ENCODE measurements at regions of chrX and their contacts with region 1.

Region 1: DNA sequence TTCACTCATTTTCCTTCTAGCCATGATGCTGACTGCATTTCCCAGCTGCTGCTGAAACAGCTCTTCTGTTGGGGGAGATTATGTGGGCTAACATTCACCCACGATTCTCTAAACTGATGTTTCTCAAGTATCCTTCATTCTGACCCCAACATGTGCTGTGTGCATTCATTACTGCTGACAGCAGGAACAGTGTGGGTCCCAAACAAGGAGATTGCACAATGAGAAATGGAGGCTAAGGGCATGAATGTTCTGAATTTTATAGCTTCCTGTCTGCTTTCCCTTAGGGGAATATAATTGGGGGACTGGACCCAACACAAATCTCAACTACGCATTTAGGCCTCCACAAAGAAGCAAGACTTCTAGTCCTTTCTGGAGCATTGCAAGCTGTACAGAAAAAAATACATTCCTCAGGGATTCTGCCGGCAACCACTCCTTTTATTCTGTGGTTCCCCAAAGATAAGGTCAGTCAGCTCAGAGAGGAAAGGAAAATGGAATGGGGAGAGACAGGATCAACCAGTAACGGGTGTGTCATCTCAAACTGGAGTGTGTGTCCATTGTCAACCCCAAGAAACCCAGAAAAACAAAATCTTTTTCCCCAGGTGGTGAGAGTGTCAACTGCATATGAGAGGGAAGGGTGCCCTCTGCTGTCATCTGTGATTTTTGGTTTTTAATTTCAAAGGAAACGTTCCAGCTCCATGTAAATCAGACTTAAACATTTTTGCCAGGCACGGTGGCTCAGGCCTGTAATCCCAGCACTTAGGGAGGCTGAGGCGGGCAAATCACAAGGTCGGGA is 81.5 kb upstream of the EGFL6 start:
- DNase-seq: peak; percentile 60 to 95
- H3K4me3 ChIP-seq: no peak overlapping the region; the same call in 1 of the 2 replicates
- H3K27ac ChIP-seq: peak overlapping the region; percentile 99
- H3K4me1 ChIP-seq: peaks cover 38% of the 10 kb centered on the region
- H3K27me3 ChIP-seq: no peaks in the 10 kb centered on the region
- CTCF ChIP-seq: peak; percentile 78

Region 2: GRCh38 chrX:12814420-12814819 is 673.5 kb before region 1 on chrX:
- CTCF ChIA-PET with region 1: no interaction called
- POLR2A ChIA-PET with region 1: no interaction called
- intact Hi-C with region 1: loop called (anchors 1 kb)
- DNase-seq: peak; percentile 44 to 51
- H3K4me3 ChIP-seq: no peak overlapping the region
- H3K27ac ChIP-seq: no peak overlapping the region
- H3K4me1 ChIP-seq: no peaks in the 10 kb centered on the region
- H3K27me3 ChIP-seq: no peaks in the 10 kb centered on the region
- CTCF ChIP-seq: peak; percentile 75

Region 3: GRCh38 chrX:12974796-12975669 is 512.9 kb before region 1 on chrX and contains the start of gene TMSB4X:
- CTCF ChIA-PET with region 1: no interaction called
- POLR2A ChIA-PET with region 1: interaction called, 19 read pairs
- intact Hi-C with region 1: loop called (anchors 1 kb)
- DNase-seq: peak; percentile 71 to 85
- H3K4me3 ChIP-seq: peak within 1 kb of the TSS; percentile 99
- H3K27ac ChIP-seq: peak within 1 kb of the TSS; percentile 99
- H3K4me1 ChIP-seq: peaks cover 36% of the 10 kb centered on the region
- H3K27me3 ChIP-seq: no peaks in the 10 kb centered on the region
- CTCF ChIP-seq: no peak
- total RNA-seq, gene TMSB4X: 2,589 and 3,588 TPM in 2 replicates

Region 4: DNA sequence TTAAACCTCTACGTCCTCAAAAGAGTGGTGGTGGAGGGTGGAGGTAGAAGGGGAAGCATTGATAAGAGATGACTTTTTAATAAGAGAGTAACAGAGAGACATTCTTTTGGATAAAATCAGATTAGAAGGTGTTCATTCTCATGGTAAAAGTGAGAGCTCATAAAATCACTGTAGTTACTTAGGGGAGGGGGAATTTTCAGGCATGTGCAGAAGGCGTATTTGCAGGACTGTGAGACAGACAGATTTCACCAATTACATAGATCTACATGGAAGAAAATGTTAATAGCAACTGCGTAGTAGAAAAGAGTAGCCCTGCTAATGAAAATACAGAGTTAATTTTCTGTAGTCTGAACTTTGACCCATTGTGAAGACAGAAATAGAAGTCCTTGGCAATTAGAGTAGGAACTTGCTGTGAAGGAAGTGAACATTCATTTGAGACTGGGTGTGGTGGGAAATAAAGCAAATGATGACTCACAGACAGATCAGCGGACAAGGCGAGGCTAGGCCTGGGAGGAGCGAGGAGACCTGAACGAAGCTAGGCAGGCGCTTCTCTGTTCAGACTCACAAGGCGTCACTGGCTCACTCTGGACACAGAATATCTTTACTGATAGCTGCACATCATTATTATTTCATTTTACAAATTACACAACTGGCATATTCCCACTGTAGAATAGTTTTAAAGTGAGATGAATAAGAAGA is 386.3 kb before region 1 on chrX:
- CTCF ChIA-PET with region 1: no interaction called
- POLR2A ChIA-PET with region 1: no interaction called
- intact Hi-C with region 1: loop called (anchors 1 kb)
- DNase-seq: peak; percentile 72 to 93
- H3K4me3 ChIP-seq: no peak overlapping the region; the same call in 1 of the 2 replicates
- H3K27ac ChIP-seq: peak overlapping the region; percentile 96
- H3K4me1 ChIP-seq: peaks cover 48% of the 10 kb centered on the region
- H3K27me3 ChIP-seq: no peaks in the 10 kb centered on the region
- CTCF ChIP-seq: no peak

Region 5: DNA sequence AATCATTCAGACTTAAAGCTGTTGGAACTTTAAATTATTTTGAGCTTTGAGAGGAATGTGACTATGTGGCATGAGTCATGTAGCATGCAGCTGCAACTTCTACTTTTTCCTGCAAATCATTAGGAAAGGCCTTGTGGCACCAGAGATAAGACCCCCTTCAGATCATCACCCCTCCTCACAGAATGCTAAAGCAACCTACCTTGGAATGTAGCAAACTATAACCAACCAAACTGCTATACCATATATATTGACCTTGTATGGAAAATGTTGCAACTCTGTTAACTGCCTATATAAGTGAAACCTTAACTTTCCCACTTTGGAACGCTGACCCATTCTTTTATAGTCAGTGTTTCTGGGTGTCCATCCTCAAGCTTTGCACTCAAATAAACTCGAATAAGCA is 200.1 kb before region 1 on chrX:
- CTCF ChIA-PET with region 1: no interaction called
- POLR2A ChIA-PET with region 1: interaction called, 16 read pairs
- intact Hi-C with region 1: loop called (anchors 1 kb)
- DNase-seq: peak; percentile 11 to 37
- H3K4me3 ChIP-seq: no peak overlapping the region
- H3K27ac ChIP-seq: peak overlapping the region; percentile 57
- H3K4me1 ChIP-seq: peaks cover 21% of the 10 kb centered on the region
- H3K27me3 ChIP-seq: no peaks in the 10 kb centered on the region
- CTCF ChIP-seq: no peak

Region 6: DNA sequence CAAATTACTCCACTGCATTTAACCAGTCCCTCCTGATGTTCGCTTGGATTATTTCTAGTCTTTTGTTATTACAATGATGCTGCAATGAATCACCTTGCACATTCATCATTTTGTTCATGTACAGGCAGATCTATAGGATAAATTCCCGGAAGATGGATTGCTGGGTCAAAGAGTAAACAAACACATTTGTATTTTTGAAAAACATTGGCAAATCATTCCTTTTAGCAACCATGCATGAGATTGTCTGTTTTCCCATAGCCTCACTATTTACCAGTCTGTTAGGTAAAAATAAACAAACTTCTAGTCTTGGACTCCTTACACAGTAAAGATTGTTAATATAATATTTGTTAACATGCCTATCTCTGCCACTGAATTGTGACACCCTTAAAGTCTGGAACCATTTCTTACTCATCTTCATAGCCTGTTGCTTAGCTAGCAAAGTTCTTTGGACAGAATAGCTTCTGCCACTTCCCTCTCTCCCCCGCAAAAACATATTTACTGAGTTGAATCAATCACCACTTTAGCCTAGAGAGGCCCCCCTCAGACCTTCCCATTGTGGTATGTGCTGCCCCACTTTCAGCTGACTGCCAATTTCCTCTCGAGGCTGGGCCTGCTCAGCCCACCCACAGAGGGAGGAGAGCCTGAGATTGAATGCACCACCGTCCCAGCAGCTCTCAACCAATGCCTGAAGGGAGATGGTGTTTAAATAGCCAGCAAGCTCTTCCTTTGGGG is 59.7 kb before region 1 on chrX:
- CTCF ChIA-PET with region 1: no interaction called
- POLR2A ChIA-PET with region 1: interaction called, 11 read pairs
- intact Hi-C with region 1: loop called (anchors 1 kb)
- DNase-seq: peak in 1 of 2 experiments; percentile 88
- H3K4me3 ChIP-seq: no peak overlapping the region
- H3K27ac ChIP-seq: peak overlapping the region; percentile 89
- H3K4me1 ChIP-seq: peaks cover 31% of the 10 kb centered on the region
- H3K27me3 ChIP-seq: no peaks in the 10 kb centered on the region
- CTCF ChIP-seq: no peak

Region 7: GRCh38 chrX:13996650-13997049 is 508.7 kb after region 1 on chrX:
- CTCF ChIA-PET with region 1: no interaction called
- POLR2A ChIA-PET with region 1: no interaction called
- intact Hi-C with region 1: no loop called
- DNase-seq: no peak
- H3K4me3 ChIP-seq: no peak overlapping the region
- H3K27ac ChIP-seq: no peak overlapping the region
- H3K4me1 ChIP-seq: no peaks in the 10 kb centered on the region
- H3K27me3 ChIP-seq: no peaks in the 10 kb centered on the region
- CTCF ChIP-seq: no peak